CD8-positive, alpha-beta T cell (primary cell): ENCODE measurements at regions of chr14 and their contacts with region 1.

Region 1: GRCh38 chr14:97564334-97564733 is 767.2 kb downstream of the VRK1 start:
- DNase-seq: no peak
- ATAC-seq: no peak
- H3K4me3 ChIP-seq: no peak overlapping the region
- H3K4me3 Mint-ChIP-seq: no peak overlapping the region
- H3K27ac ChIP-seq: no peak overlapping the region
- H3K27ac Mint-ChIP-seq: no peak overlapping the region
- H3K4me1 ChIP-seq: no peaks in the 10 kb centered on the region
- H3K4me1 Mint-ChIP-seq: no peaks in the 10 kb centered on the region
- H3K27me3 ChIP-seq: no peaks in the 10 kb centered on the region
- H3K27me3 Mint-ChIP-seq: no peaks in the 10 kb centered on the region
- CTCF ChIP-seq: no peak

Region 2: DNA sequence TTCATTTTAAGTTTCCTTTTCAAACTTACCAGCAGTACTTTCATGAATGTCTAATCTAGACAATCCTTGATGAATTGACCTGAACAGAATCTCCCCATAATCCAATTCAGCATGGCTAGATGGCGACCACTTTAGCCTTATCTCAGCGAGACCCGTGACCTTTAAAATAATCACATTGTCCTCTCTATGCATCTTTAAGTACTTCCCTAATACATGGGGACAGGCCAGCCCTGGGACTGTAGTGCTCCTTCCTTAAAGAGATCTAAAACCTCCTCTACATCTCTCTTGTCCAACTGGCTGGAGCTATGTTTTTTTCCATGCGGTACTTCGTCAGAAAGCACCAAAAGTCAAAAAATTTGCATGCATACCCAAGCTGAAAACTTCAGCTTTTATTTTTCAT is 21.1 kb before region 1 on chr14:
- CTCF ChIA-PET with region 1: no interaction called
- POLR2A ChIA-PET with region 1: no interaction called
- intact Hi-C with region 1: loop called in 1 of 2 experiments (anchors 1 kb)
- DNase-seq: no peak
- ATAC-seq: no peak
- H3K4me3 ChIP-seq: no peak overlapping the region
- H3K4me3 Mint-ChIP-seq: no peak overlapping the region
- H3K27ac ChIP-seq: no peak overlapping the region
- H3K27ac Mint-ChIP-seq: no peak overlapping the region
- H3K4me1 ChIP-seq: no peaks in the 10 kb centered on the region
- H3K4me1 Mint-ChIP-seq: peaks cover 16% of the 10 kb centered on the region
- H3K27me3 ChIP-seq: no peaks in the 10 kb centered on the region
- H3K27me3 Mint-ChIP-seq: no peaks in the 10 kb centered on the region
- CTCF ChIP-seq: no peak